Left cardiac atrium (tissue), 4 donors: ENCODE measurements at regions of chr1 and their contacts with region 1.

Region 1: GRCh38 chr1:223133824-223134435 is 9.1 kb downstream of the TLR5 start:
- DNase-seq: peak; percentile 87
- ATAC-seq: peak; percentile 87 to 93

Region 2: GRCh38 chr1:223244366-223245103 is 110.6 kb after region 1 on chr1:
- intact Hi-C with region 1: loop called in 1 of 2 experiments (anchors 10 kb)
- DNase-seq: no peak
- ATAC-seq: no peak

Region 3: GRCh38 chr1:223341121-223341520 is 207.2 kb after region 1 on chr1:
- intact Hi-C with region 1: loop called in 1 of 2 experiments (anchors 10 kb)
- DNase-seq: peak; percentile 66
- ATAC-seq: peak; percentile 79 to 88

Region 4: GRCh38 chr1:223683586-223684487 is 549.9 kb after region 1 on chr1:
- intact Hi-C with region 1: loop called in 1 of 2 experiments (anchors 5 kb)
- DNase-seq: peak; percentile 50
- ATAC-seq: peak; percentile 61 to 64